AG04450 (cell line): ENCODE measurements at regions of chr13 and their contacts with region 1.

Region 1: GRCh38 chr13:52128714-52129700 is at the start of gene NEK5:
- DNase-seq: no peak
- H3K4me3 ChIP-seq: peak within 1 kb of the TSS; percentile 70
- H3K27ac ChIP-seq: no peak within 1 kb of the TSS
- H3K27me3 ChIP-seq: peaks cover 6% of the 10 kb centered on the region
- CTCF ChIP-seq: peak; percentile 70
- polyA plus RNA-seq, gene NEK5: 0.04 TPM in 2 replicates

Region 2: GRCh38 chr13:51814825-51815650 is 314.0 kb before region 1 on chr13:
- CTCF ChIA-PET with region 1: interaction called, 61 read pairs
- POLR2A ChIA-PET with region 1: no interaction called
- DNase-seq: no peak
- H3K4me3 ChIP-seq: peak overlapping the region; percentile 45
- H3K27ac ChIP-seq: no peak overlapping the region
- H3K27me3 ChIP-seq: peaks cover 49% of the 10 kb centered on the region
- CTCF ChIP-seq: peak; percentile 83

Region 3: DNA sequence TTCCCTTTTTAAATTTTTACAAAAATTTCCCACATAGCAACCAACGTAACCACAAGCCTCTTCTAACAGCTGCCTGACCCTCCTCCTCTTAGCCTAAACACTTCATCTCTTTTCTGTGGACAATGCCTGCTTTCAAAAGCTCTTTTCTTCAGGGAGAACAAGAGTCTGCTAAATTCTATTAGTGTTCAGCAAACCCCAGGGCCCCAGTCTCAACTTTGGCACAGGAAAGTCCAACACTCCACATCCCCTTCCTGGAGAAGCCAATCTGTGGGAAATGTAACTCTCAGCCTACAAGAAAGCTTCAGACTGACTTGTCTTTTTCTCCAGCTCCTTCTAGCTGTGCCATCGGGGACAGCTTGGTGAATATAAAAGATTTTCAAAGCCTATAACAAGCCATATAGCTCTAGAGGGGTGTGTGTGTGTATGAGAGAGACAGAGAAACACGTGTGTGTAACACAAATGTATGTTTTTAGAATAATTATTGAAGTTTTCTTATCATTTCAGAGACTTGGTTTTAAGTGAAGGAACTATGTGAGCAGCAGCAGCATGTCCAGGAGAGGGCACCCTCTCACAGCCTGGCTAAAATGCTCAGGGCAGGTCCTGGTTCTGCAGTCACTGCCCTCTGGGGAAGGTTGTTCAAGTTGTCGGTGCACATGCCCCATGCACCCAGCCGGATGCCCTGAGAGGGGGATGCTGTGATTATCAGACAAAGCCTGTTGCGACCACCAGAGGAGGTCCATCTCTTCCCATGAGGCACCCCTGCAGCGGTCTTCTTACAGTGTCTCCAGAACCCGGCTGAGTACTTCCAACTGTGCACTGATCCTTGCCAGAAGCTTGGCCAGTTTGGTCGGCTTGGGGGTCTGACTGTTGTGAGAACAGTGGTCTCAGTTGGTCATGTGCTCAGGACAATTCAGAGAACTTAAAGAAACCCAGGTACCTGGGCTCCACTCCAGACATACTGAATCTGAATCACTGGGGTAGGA is 232.8 kb before region 1 on chr13:
- CTCF ChIA-PET with region 1: interaction called, 88 read pairs
- POLR2A ChIA-PET with region 1: no interaction called
- DNase-seq: peak; percentile 7
- H3K4me3 ChIP-seq: no peak overlapping the region
- H3K27ac ChIP-seq: no peak overlapping the region
- H3K27me3 ChIP-seq: peaks cover 2% of the 10 kb centered on the region
- CTCF ChIP-seq: peak; percentile 86

Region 4: GRCh38 chr13:52001120-52001731 is 127.8 kb before region 1 on chr13:
- CTCF ChIA-PET with region 1: interaction called, 39 read pairs
- POLR2A ChIA-PET with region 1: no interaction called
- DNase-seq: peak; percentile 11
- H3K4me3 ChIP-seq: no peak overlapping the region
- H3K27ac ChIP-seq: no peak overlapping the region
- H3K27me3 ChIP-seq: peaks cover 29% of the 10 kb centered on the region
- CTCF ChIP-seq: peak; percentile 76

Region 5: GRCh38 chr13:52085421-52085820 is 43.6 kb before region 1 on chr13:
- CTCF ChIA-PET with region 1: interaction called, 22 read pairs
- POLR2A ChIA-PET with region 1: no interaction called
- DNase-seq: peak; percentile 72
- H3K4me3 ChIP-seq: no peak overlapping the region
- H3K27ac ChIP-seq: no peak overlapping the region
- H3K27me3 ChIP-seq: no peaks in the 10 kb centered on the region
- CTCF ChIP-seq: no peak

Region 6: DNA sequence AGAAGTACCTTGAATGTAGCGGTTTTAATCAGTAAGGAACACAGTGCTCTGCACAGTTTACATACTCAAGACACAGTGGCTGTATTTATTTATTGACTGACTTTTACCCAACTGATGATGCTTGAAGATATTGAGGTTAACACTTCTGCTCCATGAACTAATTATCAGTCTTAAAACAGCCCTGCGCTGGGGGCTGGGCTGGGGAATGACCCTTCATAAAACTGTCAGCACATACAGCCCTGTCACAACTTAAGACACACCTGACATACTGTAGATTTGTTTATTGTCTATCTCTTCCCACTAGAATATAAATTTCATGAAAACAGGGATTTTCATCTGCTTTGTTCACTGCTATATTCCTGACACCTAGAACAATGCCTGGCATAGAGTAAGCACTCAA is 10.9 kb before region 1 on chr13:
- CTCF ChIA-PET with region 1: interaction called, 10 read pairs
- POLR2A ChIA-PET with region 1: no interaction called
- DNase-seq: no peak
- H3K4me3 ChIP-seq: no peak overlapping the region
- H3K27ac ChIP-seq: no peak overlapping the region
- H3K27me3 ChIP-seq: peaks cover 6% of the 10 kb centered on the region
- CTCF ChIP-seq: no peak

Region 7: GRCh38 chr13:52141297-52141696 is 12.3 kb after region 1 on chr13:
- CTCF ChIA-PET with region 1: interaction called, 12 read pairs
- POLR2A ChIA-PET with region 1: no interaction called
- DNase-seq: no peak
- H3K4me3 ChIP-seq: no peak overlapping the region
- H3K27ac ChIP-seq: no peak overlapping the region
- H3K27me3 ChIP-seq: no peaks in the 10 kb centered on the region
- CTCF ChIP-seq: 0 out of 2 replicates have a peak, but pooled peaks have one; percentile 11